ENCODE measurements at regions of chr1 and their contacts with region 1.

Region 1: GRCh38 chr1:223700942-223701637 is 11.2 kb upstream of the CAPN2 start:
- DNase-seq: no peak
- ATAC-seq: no peak
- H3K4me3 ChIP-seq: no peak overlapping the region
- H3K4me3 Mint-ChIP-seq: no peak overlapping the region
- H3K27ac ChIP-seq: no peak overlapping the region
- H3K27ac Mint-ChIP-seq: no peak overlapping the region
- H3K4me1 ChIP-seq: peaks cover 7% of the 10 kb centered on the region
- H3K4me1 Mint-ChIP-seq: peaks cover 6% of the 10 kb centered on the region
- H3K27me3 ChIP-seq: no peaks in the 10 kb centered on the region
- H3K27me3 Mint-ChIP-seq: no peaks in the 10 kb centered on the region
- CTCF ChIP-seq: no peak

Region 2: GRCh38 chr1:223001653-223002634 is 699.1 kb before region 1 on chr1:
- CTCF ChIA-PET with region 1: no interaction called
- POLR2A ChIA-PET with region 1: no interaction called
- intact Hi-C with region 1: no loop called
- DNase-seq: no peak
- ATAC-seq: no peak
- H3K4me3 ChIP-seq: no peak overlapping the region
- H3K4me3 Mint-ChIP-seq: no peak overlapping the region
- H3K27ac ChIP-seq: no peak overlapping the region
- H3K27ac Mint-ChIP-seq: no peak overlapping the region
- H3K4me1 ChIP-seq: no peaks in the 10 kb centered on the region
- H3K4me1 Mint-ChIP-seq: no peaks in the 10 kb centered on the region
- H3K27me3 ChIP-seq: no peaks in the 10 kb centered on the region
- H3K27me3 Mint-ChIP-seq: no peaks in the 10 kb centered on the region
- CTCF ChIP-seq: no peak

Region 3: DNA sequence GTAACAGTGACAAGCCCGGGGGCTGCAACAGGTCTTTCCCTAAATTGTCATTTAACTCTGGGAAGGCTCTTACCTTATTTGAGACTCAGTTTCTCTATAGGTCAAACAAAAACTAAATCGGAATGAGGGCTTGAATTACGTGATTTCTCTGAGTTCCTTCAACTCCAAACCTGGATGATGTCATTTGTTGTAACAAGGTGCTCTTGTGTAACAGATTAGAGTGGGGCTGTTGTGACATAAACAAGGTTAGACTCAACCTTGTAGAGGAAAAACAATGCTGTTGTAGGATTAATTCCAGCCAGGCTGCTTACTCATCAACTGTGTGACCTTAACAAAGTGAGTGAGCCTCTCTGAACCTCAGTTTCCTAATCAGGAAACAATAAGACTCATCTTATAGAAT is 411.5 kb before region 1 on chr1:
- CTCF ChIA-PET with region 1: no interaction called
- POLR2A ChIA-PET with region 1: no interaction called
- intact Hi-C with region 1: no loop called
- DNase-seq: no peak
- ATAC-seq: no peak
- H3K4me3 ChIP-seq: no peak overlapping the region
- H3K4me3 Mint-ChIP-seq: no peak overlapping the region
- H3K27ac ChIP-seq: no peak overlapping the region
- H3K27ac Mint-ChIP-seq: no peak overlapping the region
- H3K4me1 ChIP-seq: no peaks in the 10 kb centered on the region
- H3K4me1 Mint-ChIP-seq: no peaks in the 10 kb centered on the region
- H3K27me3 ChIP-seq: no peaks in the 10 kb centered on the region
- H3K27me3 Mint-ChIP-seq: no peaks in the 10 kb centered on the region
- CTCF ChIP-seq: no peak

Region 4: DNA sequence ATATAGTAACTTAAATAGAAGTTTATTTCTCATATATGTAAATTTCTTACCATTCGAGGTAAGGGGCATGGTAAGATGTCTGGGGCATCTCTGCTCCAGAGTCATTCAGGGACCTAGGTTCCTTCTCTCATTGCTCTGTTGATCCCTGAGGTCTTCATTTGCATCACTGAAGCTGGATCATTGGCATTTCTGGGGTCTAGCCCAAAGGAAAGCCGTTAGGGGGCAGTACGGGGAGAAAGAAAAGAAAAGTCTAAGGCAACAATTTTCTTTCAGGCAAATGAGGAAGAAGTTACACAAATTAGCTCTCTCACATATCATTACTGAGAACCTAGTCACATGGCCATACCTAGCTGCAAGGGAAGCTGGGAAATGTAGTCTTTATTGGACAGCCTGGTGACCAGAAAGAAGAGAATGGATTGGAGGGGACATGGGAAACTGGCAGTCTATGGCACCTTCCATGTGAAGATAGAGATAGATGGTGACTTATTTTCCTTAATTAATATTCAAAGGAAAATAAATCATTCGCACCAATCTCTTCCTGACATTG is 327.0 kb before region 1 on chr1:
- CTCF ChIA-PET with region 1: no interaction called
- POLR2A ChIA-PET with region 1: no interaction called
- intact Hi-C with region 1: no loop called
- DNase-seq: no peak
- ATAC-seq: no peak
- H3K4me3 ChIP-seq: no peak overlapping the region
- H3K4me3 Mint-ChIP-seq: no peak overlapping the region
- H3K27ac ChIP-seq: no peak overlapping the region
- H3K27ac Mint-ChIP-seq: no peak overlapping the region
- H3K4me1 ChIP-seq: no peaks in the 10 kb centered on the region
- H3K4me1 Mint-ChIP-seq: no peaks in the 10 kb centered on the region
- H3K27me3 ChIP-seq: no peaks in the 10 kb centered on the region
- H3K27me3 Mint-ChIP-seq: peaks cover 16% of the 10 kb centered on the region
- CTCF ChIP-seq: no peak

Region 5: GRCh38 chr1:223460566-223461189 is 240.4 kb before region 1 on chr1:
- CTCF ChIA-PET with region 1: no interaction called
- POLR2A ChIA-PET with region 1: no interaction called
- intact Hi-C with region 1: no loop called
- DNase-seq: no peak
- ATAC-seq: no peak
- H3K4me3 ChIP-seq: no peak overlapping the region
- H3K4me3 Mint-ChIP-seq: no peak overlapping the region
- H3K27ac ChIP-seq: no peak overlapping the region
- H3K27ac Mint-ChIP-seq: no peak overlapping the region
- H3K4me1 ChIP-seq: no peaks in the 10 kb centered on the region
- H3K4me1 Mint-ChIP-seq: no peaks in the 10 kb centered on the region
- H3K27me3 ChIP-seq: no peaks in the 10 kb centered on the region
- H3K27me3 Mint-ChIP-seq: no peaks in the 10 kb centered on the region
- CTCF ChIP-seq: no peak

Region 6: GRCh38 chr1:223712194-223712849 is 11.2 kb after region 1 on chr1 and contains the start of gene CAPN2:
- CTCF ChIA-PET with region 1: interaction called, 17 read pairs
- POLR2A ChIA-PET with region 1: interaction called, 3 read pairs
- intact Hi-C with region 1: loop called in 1 of 2 experiments (anchors 1 kb)
- DNase-seq: peak; percentile 20 to 83 (median 58)
- ATAC-seq: peak; percentile 49
- H3K4me3 ChIP-seq: peak within 1 kb of the TSS; percentile 64 to 81
- H3K4me3 Mint-ChIP-seq: peak within 1 kb of the TSS; percentile 90
- H3K27ac ChIP-seq: peak within 1 kb of the TSS; percentile 62 to 85
- H3K27ac Mint-ChIP-seq: peak within 1 kb of the TSS; percentile 93
- H3K4me1 ChIP-seq: peaks cover 57% of the 10 kb centered on the region
- H3K4me1 Mint-ChIP-seq: peaks cover 56% of the 10 kb centered on the region
- H3K27me3 ChIP-seq: no peaks in the 10 kb centered on the region
- H3K27me3 Mint-ChIP-seq: no peaks in the 10 kb centered on the region
- CTCF ChIP-seq: peak; percentile 50
- total RNA-seq, gene CAPN2: 83.0 to 84.7 TPM

Region 7: DNA sequence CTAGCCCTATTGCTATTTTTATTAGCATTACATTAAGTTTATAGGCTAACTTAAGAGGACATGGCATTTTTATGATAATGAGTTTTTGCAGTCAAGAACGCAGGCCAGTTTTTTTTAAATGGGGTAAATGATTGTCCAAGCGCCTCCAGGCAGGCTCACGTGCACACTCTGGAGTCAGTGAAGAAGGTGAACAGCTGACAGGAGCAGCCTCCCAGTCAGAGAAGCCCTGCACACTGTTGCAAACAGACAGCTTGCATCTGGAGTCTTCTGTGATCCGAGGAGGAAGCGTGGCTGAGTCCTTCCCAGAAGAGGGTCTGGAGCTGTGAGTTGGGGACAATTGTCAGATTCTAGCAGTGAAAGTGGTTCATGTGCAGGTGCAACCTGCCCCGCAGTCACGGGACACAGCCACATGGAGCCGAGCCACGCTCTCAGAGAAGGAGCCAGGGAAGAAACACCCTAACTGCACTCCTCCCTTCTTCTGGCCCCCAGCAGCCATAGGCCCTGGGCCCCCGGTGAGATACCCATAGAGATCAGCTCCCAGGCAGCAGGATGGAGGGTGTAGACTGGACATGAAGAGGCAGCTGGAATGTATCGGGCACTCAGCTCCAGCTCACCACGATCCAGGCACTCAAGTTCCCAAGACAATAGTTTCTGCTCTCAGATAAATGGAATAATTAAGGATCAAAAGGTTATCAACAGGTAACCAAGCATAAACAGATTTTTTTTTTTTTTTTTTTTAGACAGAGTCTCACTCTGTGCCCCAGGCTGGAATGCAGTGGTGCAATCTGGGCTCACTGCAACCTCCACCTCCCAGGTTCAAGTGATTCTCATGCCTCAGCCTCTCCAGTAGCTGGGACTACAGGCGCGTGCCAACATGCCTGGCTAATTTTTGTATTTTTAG is 37.6 kb after region 1 on chr1:
- CTCF ChIA-PET with region 1: interaction called, 135 read pairs
- POLR2A ChIA-PET with region 1: no interaction called
- intact Hi-C with region 1: no loop called
- DNase-seq: no peak
- ATAC-seq: no peak
- H3K4me3 ChIP-seq: no peak overlapping the region
- H3K4me3 Mint-ChIP-seq: no peak overlapping the region
- H3K27ac ChIP-seq: no peak overlapping the region
- H3K27ac Mint-ChIP-seq: no peak overlapping the region
- H3K4me1 ChIP-seq: peaks cover 4% of the 10 kb centered on the region
- H3K4me1 Mint-ChIP-seq: peaks cover 6% of the 10 kb centered on the region
- H3K27me3 ChIP-seq: no peaks in the 10 kb centered on the region
- H3K27me3 Mint-ChIP-seq: no peaks in the 10 kb centered on the region
- CTCF ChIP-seq: no peak

Region 8: GRCh38 chr1:224051086-224051406 is 350.0 kb after region 1 on chr1:
- CTCF ChIA-PET with region 1: interaction called, 4 read pairs
- POLR2A ChIA-PET with region 1: no interaction called
- intact Hi-C with region 1: loop called in 1 of 2 experiments (anchors 2 kb)
- DNase-seq: no peak
- ATAC-seq: no peak
- H3K4me3 ChIP-seq: no peak overlapping the region
- H3K4me3 Mint-ChIP-seq: no peak overlapping the region
- H3K27ac ChIP-seq: no peak overlapping the region
- H3K27ac Mint-ChIP-seq: no peak overlapping the region
- H3K4me1 ChIP-seq: no peaks in the 10 kb centered on the region
- H3K4me1 Mint-ChIP-seq: peaks cover 2% of the 10 kb centered on the region
- H3K27me3 ChIP-seq: no peaks in the 10 kb centered on the region
- H3K27me3 Mint-ChIP-seq: peaks cover 3% of the 10 kb centered on the region
- CTCF ChIP-seq: no peak